ENCODE measurements at regions of chr1 and their contacts with region 1.

Region 1: DNA sequence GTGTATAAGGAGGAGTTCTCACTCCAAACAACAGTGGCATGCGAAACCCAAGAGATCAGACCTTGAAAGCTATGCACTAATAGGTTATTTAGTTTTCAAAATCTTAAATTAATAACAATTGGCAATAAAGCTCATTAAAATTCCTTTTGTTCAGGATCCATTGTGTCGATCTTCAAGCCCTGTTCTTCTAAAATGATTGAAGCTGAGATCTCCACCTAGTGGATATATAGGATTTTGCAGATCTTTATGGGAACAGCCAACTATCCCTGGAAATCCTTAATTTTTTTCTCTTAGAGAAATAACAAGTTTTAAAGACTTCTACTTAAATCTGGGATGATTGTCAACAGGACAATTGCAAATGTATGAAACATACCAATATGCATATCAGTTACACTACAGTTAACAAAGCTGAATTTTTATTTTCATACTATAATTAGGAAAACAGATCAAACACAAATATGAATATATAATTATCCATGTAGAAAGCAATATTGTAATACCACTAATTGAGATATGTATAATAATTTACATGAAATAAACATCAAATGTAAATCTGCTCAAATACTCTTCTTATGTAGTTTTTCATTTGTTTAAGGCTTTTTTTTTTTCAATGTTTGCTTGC is 43.3 kb downstream of the LRRC53 start:
- DNase-seq: peak; percentile 66
- H3K4me3 ChIP-seq: peak overlapping the region in 1 of 2 experiments; percentile 41; a peak in 1 of 4 replicates
- H3K27ac ChIP-seq: no peak overlapping the region
- H3K4me1 ChIP-seq: no peaks in the 10 kb centered on the region
- H3K27me3 ChIP-seq: no peaks in the 10 kb centered on the region
- CTCF ChIP-seq: peak; percentile 75
- EP300 ChIP-seq: no peak
- RAD21 ChIP-seq: peak; percentile 89

Region 2: DNA sequence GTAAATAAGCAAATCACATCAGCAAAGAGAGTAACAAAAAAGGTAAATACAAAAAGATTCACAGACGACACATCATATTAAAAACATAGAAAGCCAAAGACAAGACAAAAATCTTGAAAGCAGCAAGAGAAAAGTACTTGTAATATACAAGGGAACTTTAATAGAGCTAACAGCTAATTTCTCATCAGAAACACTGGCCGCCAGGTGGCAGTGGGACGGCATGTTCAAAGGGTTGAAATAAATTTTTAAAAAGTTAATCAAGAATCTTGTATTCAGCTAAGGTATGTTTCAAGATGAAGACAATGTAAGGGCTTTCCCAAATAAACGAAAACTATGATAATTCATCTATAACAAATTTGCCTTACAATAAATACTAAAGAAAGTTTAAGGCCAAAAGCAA is 629.2 kb before region 1 on chr1:
- CTCF ChIA-PET with region 1: interaction called, 15 read pairs
- POLR2A ChIA-PET with region 1: no interaction called
- DNase-seq: no peak
- H3K4me3 ChIP-seq: no peak overlapping the region
- H3K27ac ChIP-seq: no peak overlapping the region
- H3K4me1 ChIP-seq: no peaks in the 10 kb centered on the region
- H3K27me3 ChIP-seq: no peaks in the 10 kb centered on the region
- CTCF ChIP-seq: peak; percentile 64
- EP300 ChIP-seq: no peak
- RAD21 ChIP-seq: peak; percentile 67

Region 3: DNA sequence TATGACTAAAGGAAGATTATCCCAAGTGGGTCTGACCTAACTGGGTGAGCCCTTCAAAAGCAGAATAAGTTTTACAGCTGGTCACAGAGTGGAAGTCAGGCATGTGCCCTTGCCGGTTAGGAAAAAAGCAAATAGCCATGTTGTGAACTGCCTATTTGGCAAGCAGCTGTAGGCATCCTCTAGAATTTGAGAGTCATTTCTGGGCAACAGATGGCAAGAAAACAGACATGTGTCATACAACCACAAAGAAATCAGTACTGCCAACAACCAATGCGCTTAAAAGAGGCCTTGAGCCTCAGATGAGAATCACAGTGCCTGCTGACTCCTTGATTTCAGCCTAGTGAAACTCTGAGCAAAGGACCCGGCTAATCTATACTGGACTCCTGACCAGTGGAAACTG is 16.5 kb after region 1 on chr1:
- CTCF ChIA-PET with region 1: interaction called, 18 read pairs
- POLR2A ChIA-PET with region 1: no interaction called
- DNase-seq: no peak
- H3K4me3 ChIP-seq: no peak overlapping the region
- H3K27ac ChIP-seq: no peak overlapping the region
- H3K4me1 ChIP-seq: no peaks in the 10 kb centered on the region
- H3K27me3 ChIP-seq: no peaks in the 10 kb centered on the region
- CTCF ChIP-seq: no peak
- EP300 ChIP-seq: no peak
- RAD21 ChIP-seq: no peak